ENCODE measurements at regions of chr2 and their contacts with region 1.

Region 1: GRCh38 chr2:200483729-200484198 is 26.1 kb downstream of the KCTD18 start:
- DNase-seq: no peak
- H3K4me3 ChIP-seq: no peak overlapping the region
- H3K27ac ChIP-seq: no peak overlapping the region
- H3K4me1 ChIP-seq: peaks cover 0 to 15% (median 0%) of the 10 kb centered on the region in 4 donors
- H3K27me3 ChIP-seq: no peaks in the 10 kb centered on the region
- CTCF ChIP-seq: peak in 1 of 3 experiments; percentile 8
- EP300 ChIP-seq: no peak
- POLR2A ChIP-seq: no peak

Region 2: DNA sequence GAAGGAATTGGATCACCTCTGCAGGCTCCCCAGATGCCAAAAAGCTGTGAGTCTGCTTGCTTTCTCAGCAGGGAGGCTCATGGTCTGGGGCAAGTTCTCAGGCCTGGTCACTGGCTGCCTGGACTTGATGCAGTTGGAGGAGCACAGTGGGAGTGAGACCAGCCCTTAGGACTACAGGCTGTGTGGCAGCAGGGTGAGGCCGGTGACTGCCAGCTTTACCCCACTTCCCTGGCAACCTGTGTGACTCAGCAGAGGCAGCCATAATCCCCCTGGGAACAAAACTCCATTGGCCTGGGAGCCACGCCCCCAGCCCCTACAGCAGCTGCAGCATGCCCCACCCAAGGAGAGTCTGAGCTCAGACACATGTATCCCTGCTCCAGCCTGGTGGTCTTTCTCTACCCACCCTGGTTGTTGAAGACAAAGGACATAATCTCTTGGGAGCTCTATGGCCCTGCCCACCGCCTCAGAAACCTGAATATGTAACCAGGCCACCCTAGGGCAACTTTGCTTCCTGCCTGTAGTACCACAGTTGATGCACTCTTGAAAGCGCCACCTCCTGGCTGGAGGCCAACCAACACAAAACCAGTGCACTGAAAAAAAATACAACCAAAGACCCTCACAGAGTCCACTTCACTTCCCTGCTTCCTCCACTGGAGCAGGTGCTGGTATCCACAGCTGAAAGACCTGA is 284.0 kb before region 1 on chr2:
- intact Hi-C with region 1: no loop called
- DNase-seq: no peak
- H3K4me3 ChIP-seq: no peak overlapping the region
- H3K27ac ChIP-seq: no peak overlapping the region
- H3K4me1 ChIP-seq: no peaks in the 10 kb centered on the region
- H3K27me3 ChIP-seq: no peaks in the 10 kb centered on the region
- CTCF ChIP-seq: no peak
- EP300 ChIP-seq: no peak
- POLR2A ChIP-seq: no peak

Region 3: DNA sequence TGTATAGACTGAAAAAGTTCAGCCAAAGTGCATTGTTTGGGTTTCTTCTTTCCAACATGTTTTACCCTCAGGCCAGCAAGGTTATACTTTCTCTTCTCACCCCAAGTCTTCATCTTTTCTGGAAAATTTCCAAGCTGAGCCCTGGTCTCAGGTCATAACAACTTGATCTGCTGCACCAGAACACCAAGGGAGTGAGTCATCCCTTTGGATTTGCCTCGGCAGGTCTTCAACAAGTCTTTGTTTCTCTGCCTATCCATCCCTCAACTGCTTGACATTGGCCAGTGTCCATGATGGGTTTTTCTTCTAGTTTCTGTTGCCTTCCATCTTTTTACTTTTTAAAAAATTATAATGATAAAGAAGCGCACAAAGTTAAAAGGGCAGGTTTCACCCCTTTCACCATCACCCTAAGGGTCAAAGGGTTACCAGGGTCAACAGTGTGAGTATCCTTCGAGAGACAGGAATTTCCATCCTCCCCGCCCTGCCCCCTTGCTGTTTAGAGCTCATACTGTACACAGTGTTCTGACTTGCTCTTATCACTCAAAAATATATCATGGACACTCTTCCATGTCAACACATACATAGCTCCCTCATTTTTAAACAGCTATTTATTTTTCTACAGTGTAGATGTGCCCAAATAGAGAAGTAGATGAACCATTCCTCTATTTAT is 183.0 kb before region 1 on chr2:
- intact Hi-C with region 1: loop called (anchors 5 kb)
- DNase-seq: no peak
- H3K4me3 ChIP-seq: no peak overlapping the region
- H3K27ac ChIP-seq: no peak overlapping the region
- H3K4me1 ChIP-seq: peaks cover 6 to 10% (median 7%) of the 10 kb centered on the region in 4 donors
- H3K27me3 ChIP-seq: no peaks in the 10 kb centered on the region
- CTCF ChIP-seq: no peak
- EP300 ChIP-seq: no peak
- POLR2A ChIP-seq: no peak

Region 4: DNA sequence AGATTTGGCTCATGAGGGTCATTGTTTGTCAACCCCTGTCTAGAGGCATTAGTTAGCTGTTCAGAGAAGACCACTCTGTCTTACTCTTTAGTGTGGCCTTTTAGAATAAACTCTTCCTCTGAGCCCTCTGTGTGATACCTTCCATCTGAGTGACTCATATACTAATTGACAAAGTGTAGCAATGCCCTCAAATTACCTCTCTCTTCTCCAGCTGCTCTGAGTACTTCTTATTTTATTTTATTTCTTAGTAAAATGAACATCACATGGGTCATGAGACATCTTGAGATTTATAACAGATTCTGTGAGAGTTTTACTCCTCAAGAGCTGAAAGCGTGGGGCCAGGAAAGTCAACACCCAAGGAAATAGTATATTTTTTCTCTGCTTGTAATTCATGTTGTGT is 41.3 kb before region 1 on chr2:
- intact Hi-C with region 1: no loop called
- DNase-seq: no peak
- H3K4me3 ChIP-seq: no peak overlapping the region
- H3K27ac ChIP-seq: no peak overlapping the region
- H3K4me1 ChIP-seq: peaks cover 0 to 15% (median 4%) of the 10 kb centered on the region in 4 donors
- H3K27me3 ChIP-seq: no peaks in the 10 kb centered on the region
- CTCF ChIP-seq: no peak
- EP300 ChIP-seq: no peak
- POLR2A ChIP-seq: no peak

Measured in esophagus muscularis mucosa (tissue), 4 donors.